ENCODE measurements at regions of chr12 and their contacts with region 1.

Region 1: DNA sequence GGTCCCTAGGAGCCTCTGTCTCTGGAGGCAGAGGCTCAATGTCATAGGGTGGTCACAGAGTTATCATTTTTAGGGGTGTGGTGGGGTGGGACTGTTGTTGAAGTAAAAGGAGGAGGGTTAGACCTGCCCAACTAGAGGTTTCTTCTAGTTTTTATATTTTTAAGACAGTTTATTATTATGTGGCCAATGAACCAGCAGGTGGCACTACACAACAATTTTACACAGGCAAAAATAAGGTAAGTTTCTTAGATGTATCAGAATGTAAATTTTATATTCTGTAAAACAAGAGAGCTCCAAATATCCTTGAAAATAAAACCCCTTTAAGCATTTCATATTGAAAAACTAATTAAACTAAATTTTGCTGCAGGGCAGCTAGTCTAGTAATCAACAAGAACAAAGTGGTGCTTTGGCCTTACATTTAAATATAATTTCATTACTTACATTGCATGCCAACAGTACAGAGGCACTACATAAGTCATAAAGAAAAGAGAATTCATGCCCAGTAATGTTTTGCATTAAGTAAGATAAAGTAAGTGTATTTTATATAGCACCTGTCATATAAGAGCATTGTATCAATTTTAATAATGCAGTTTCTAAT is 22.2 kb upstream of the OVCH1 start:
- DNase-seq: peak; percentile 29
- ATAC-seq: peak; percentile 64
- H3K4me3 ChIP-seq: no peak overlapping the region
- H3K27ac ChIP-seq: no peak overlapping the region
- H3K4me1 ChIP-seq: no peaks in the 10 kb centered on the region
- H3K27me3 ChIP-seq: no peaks in the 10 kb centered on the region
- CTCF ChIP-seq: peak; percentile 47 to 66 (median 49); a peak in 5 of 6 replicates
- POLR2A ChIP-seq: no peak
- RAD21 ChIP-seq: peak; percentile 75

Region 2: DNA sequence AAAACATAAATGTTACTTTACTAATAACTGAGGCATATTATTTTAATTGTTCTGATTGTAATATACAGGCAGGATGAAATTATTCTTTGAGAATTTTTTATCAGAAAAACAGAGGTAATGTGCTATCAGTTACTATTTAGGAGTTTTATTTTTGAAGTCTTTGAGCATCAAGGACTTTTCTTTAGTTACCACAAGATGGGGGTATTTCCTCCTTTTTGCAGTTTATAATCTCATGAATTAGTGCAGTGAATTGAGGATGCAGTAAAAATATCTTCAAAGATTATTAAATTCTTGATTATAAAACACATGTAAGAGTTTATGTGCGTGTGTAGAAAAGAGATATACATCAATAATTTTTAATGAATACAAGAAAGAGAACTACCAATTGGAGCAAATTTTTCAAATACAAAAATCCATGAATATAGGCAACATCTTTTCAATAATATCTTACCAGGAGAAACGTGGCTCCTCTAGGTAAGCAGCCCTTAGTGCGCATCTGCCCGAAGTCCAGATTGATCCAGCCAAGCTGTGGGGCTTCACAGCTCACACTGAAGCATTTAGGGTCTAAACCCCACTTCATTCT is 210.3 kb before region 1 on chr12:
- CTCF ChIA-PET with region 1: interaction called, 5 read pairs
- POLR2A ChIA-PET with region 1: no interaction called
- RAD21 ChIA-PET with region 1: no interaction called
- intact Hi-C with region 1: loop called (anchors 1 kb)
- DNase-seq: peak; percentile 10
- ATAC-seq: no peak
- H3K4me3 ChIP-seq: no peak overlapping the region
- H3K27ac ChIP-seq: no peak overlapping the region
- H3K4me1 ChIP-seq: no peaks in the 10 kb centered on the region
- H3K27me3 ChIP-seq: no peaks in the 10 kb centered on the region
- CTCF ChIP-seq: peak; percentile 28 to 46 (median 29); a peak in 4 of 6 replicates
- POLR2A ChIP-seq: no peak
- RAD21 ChIP-seq: peak; percentile 52

Region 3: GRCh38 chr12:29398495-29398894 is 121.2 kb before region 1 on chr12:
- CTCF ChIA-PET with region 1: no interaction called
- POLR2A ChIA-PET with region 1: no interaction called
- RAD21 ChIA-PET with region 1: no interaction called
- intact Hi-C with region 1: no loop called
- DNase-seq: no peak
- ATAC-seq: no peak
- H3K4me3 ChIP-seq: no peak overlapping the region
- H3K27ac ChIP-seq: no peak overlapping the region
- H3K4me1 ChIP-seq: no peaks in the 10 kb centered on the region
- H3K27me3 ChIP-seq: no peaks in the 10 kb centered on the region
- CTCF ChIP-seq: no peak
- POLR2A ChIP-seq: no peak
- RAD21 ChIP-seq: no peak

Region 4: DNA sequence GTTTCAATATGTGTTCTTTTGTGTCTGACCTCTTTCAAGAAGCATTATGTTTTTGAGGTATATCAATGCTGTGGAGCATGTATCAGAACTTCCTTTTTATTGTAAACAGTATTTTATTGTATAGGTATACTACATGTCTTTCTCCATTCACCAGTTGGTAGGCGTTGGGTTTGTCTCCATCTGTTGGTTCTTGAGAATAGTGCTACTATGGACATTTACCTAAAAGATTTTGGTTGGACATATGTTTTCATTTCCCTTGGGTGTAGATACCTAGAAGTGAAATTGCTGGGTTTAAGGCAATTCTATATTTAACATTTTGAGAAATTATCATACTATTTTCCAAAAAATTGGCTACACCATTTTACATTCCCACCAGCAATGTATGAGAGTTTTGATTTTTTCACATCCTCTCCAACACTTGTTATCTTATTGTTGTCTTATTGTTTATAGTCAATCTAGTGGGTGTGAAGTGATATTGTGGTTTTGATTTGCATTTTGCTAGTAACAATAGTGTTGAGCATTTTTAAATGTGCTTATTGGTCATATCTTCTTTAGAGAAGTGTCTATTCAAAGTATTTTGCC is 766.8 kb after region 1 on chr12:
- CTCF ChIA-PET with region 1: no interaction called
- POLR2A ChIA-PET with region 1: no interaction called
- RAD21 ChIA-PET with region 1: no interaction called
- intact Hi-C with region 1: loop called (anchors 2 kb)
- DNase-seq: peak; percentile 22
- ATAC-seq: no peak; the same call in 1 of the 2 replicates
- H3K4me3 ChIP-seq: no peak overlapping the region
- H3K27ac ChIP-seq: no peak overlapping the region
- H3K4me1 ChIP-seq: no peaks in the 10 kb centered on the region
- H3K27me3 ChIP-seq: no peaks in the 10 kb centered on the region
- CTCF ChIP-seq: peak; percentile 34 to 66 (median 49); a peak in 5 of 6 replicates
- POLR2A ChIP-seq: no peak
- RAD21 ChIP-seq: peak; percentile 64

Region 5: DNA sequence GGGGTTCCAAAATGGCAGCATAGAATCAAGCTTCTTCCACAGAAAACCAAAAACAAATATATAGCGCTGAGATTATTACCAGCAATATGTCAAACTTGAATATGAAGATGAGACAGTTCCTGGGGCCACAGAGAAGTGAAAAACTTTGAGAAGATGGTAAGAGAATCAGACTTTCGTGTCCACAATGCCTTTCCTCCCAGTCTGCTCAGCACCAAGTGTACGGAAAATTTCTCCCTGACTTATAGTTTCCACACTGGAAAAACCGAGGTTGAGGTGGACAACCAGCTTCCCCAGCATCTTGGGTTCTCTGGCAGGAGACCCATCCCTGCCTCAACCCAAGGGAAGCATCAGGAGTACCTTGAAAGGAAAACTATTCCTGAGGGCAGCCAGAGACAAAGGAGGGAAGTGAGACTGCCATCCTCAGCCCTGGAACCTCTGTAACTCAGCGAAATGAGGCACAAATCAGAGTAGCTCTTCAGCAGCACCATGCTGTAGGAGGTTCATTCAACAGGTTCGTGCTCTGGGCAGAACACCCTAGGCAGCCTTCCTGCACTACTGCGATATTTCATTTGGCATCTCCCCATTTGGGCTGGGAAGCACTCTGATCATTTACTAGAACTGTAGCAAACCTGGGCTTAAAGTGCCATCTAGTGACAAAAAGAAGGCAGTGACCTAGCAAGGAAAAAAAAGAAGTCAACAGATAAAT is 1287.5 kb after region 1 on chr12:
- CTCF ChIA-PET with region 1: interaction called, 4 read pairs
- POLR2A ChIA-PET with region 1: no interaction called
- RAD21 ChIA-PET with region 1: no interaction called
- intact Hi-C with region 1: loop called (anchors 1 kb)
- DNase-seq: peak; percentile 51
- ATAC-seq: peak; percentile 96
- H3K4me3 ChIP-seq: no peak overlapping the region
- H3K27ac ChIP-seq: no peak overlapping the region
- H3K4me1 ChIP-seq: peaks cover 0 to 4% of the 10 kb centered on the region in 2 experiments; a peak in 1 of 4 replicates
- H3K27me3 ChIP-seq: no peaks in the 10 kb centered on the region
- CTCF ChIP-seq: peak; percentile 68 to 96 (median 73)
- POLR2A ChIP-seq: no peak
- RAD21 ChIP-seq: peak; percentile 94

Region 6: DNA sequence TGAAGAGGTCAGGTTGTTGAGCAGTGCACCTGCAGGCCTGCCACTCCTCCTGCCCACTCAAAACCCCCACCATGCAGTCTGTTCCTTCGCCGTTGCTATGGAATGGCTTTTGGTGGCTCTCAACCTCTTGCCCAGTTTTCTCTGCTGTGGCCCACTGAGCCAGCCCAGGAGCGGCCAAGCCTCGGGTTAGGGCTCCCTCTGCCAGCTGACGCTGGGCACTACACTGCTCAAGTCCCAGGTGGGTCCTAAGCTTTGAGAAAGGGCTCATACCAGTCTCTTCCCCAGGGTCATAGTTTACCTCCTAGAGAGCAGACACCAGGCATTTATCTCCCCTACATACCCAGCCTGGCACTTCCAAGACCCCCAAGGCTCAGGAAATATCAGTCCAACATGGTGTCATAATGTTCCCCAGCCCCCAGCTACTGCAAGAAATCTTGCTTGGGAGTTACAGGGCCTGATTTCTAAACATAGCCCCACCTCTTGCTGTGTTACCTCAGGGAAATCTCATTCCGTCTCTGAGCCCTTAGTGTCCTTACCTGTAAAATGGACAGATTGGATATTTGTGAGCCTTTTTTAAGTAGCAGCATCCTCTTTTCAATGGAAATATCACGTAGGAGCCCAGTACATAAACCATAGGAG is 1466.2 kb after region 1 on chr12:
- CTCF ChIA-PET with region 1: no interaction called
- POLR2A ChIA-PET with region 1: no interaction called
- RAD21 ChIA-PET with region 1: no interaction called
- intact Hi-C with region 1: loop called (anchors 10 kb)
- DNase-seq: peak; percentile 27
- ATAC-seq: peak; percentile 91
- H3K4me3 ChIP-seq: no peak overlapping the region
- H3K27ac ChIP-seq: no peak overlapping the region
- H3K4me1 ChIP-seq: peaks cover 0 to 4% of the 10 kb centered on the region in 2 experiments; a peak in 2 of 4 replicates
- H3K27me3 ChIP-seq: no peaks in the 10 kb centered on the region
- CTCF ChIP-seq: peak; percentile 65 to 86 (median 71)
- POLR2A ChIP-seq: no peak
- RAD21 ChIP-seq: peak; percentile 77